MCF 10A (cell line): ENCODE measurements at regions of chr6 and their contacts with region 1.

Region 1: GRCh38 chr6:31827286-31828079 is at the start of gene HSPA1B:
- DNase-seq: peak; percentile 100
- H3K4me3 Mint-ChIP-seq: peak within 1 kb of the TSS; percentile 78
- H3K27ac Mint-ChIP-seq: peak within 1 kb of the TSS; percentile 99
- H3K4me1 Mint-ChIP-seq: peaks cover 13% of the 10 kb centered on the region
- H3K27me3 Mint-ChIP-seq: no peaks in the 10 kb centered on the region
- CTCF ChIP-seq: no peak
- total RNA-seq, gene HSPA1B: 29.8 and 51.6 TPM in 2 replicates

Region 2: GRCh38 chr6:31665501-31666336 is 161.8 kb before region 1 on chr6 and contains the start of gene CSNK2B:
- CTCF ChIA-PET with region 1: no interaction called
- POLR2A ChIA-PET with region 1: interaction called, 36 read pairs
- intact Hi-C with region 1: no loop called
- DNase-seq: peak; percentile 98
- H3K4me3 Mint-ChIP-seq: peak within 1 kb of the TSS; percentile 99
- H3K27ac Mint-ChIP-seq: peak within 1 kb of the TSS; percentile 99
- H3K4me1 Mint-ChIP-seq: peaks cover 31% of the 10 kb centered on the region
- H3K27me3 Mint-ChIP-seq: no peaks in the 10 kb centered on the region
- CTCF ChIP-seq: no peak
- total RNA-seq, gene CSNK2B: 197 and 209 TPM in 2 replicates

Region 3: GRCh38 chr6:31702819-31703522 is 124.5 kb before region 1 on chr6 and contains the start of gene ABHD16A:
- CTCF ChIA-PET with region 1: interaction called, 3 read pairs
- POLR2A ChIA-PET with region 1: interaction called, 20 read pairs
- intact Hi-C with region 1: no loop called
- DNase-seq: peak; percentile 98
- H3K4me3 Mint-ChIP-seq: peak within 1 kb of the TSS; percentile 95
- H3K27ac Mint-ChIP-seq: peak within 1 kb of the TSS; percentile 89
- H3K4me1 Mint-ChIP-seq: peaks cover 5% of the 10 kb centered on the region
- H3K27me3 Mint-ChIP-seq: no peaks in the 10 kb centered on the region
- CTCF ChIP-seq: no peak
- total RNA-seq, gene ABHD16A: 32.1 and 42.7 TPM in 2 replicates

Region 4: GRCh38 chr6:31776989-31777666 is 50.4 kb before region 1 on chr6 and contains the start of gene VWA7:
- CTCF ChIA-PET with region 1: interaction called, 4 read pairs
- POLR2A ChIA-PET with region 1: interaction called, 17 read pairs
- intact Hi-C with region 1: loop called (anchors 1 kb)
- DNase-seq: peak; percentile 95
- H3K4me3 Mint-ChIP-seq: peak within 1 kb of the TSS; percentile 26
- H3K27ac Mint-ChIP-seq: no peak within 1 kb of the TSS
- H3K4me1 Mint-ChIP-seq: peaks cover 26% of the 10 kb centered on the region
- H3K27me3 Mint-ChIP-seq: no peaks in the 10 kb centered on the region
- CTCF ChIP-seq: no peak
- total RNA-seq, gene VWA7: 2.0 and 3.1 TPM in 2 replicates

Region 5: DNA sequence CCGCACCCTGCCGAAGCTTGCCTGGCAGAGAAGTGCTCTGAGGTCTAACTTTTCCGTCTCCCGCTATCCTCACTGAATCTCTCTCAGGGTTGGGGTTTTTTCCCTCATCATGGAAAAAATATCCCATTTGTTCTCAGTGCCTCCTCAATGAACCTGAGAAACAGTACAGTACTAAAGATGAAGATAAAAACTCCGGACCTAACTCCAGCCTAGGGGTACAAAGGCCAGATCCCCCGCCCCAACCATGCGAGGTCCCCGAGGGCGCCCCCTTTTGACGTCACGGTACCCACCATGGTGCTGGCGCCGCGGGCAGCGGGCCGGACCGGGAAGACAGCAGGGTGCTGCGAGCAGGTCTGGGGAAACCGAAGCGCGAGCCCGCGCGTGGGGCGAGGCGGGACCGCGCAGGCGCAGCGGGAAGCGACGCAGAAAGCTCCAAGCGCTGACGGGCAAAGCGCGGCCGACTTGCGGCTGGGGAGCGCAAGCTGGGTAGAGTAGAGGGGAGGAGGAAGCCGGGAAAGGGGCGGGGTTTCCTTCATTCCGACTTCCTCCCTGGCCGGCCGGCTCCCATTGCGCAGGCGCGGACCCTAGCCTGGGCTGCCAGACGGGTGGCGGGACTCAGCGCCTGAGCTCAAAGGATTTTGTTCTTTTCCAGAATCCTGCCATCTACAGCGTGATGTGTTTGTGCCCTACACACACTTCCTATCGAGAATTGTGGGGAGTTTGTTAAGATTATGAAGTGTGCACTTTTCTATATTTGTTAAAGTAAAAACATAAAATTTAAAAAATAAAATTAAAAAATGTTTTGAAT is 20.8 kb before region 1 on chr6 and contains the start of gene LSM2:
- CTCF ChIA-PET with region 1: interaction called, 6 read pairs
- POLR2A ChIA-PET with region 1: interaction called, 192 read pairs
- intact Hi-C with region 1: no loop called
- DNase-seq: peak; percentile 98
- H3K4me3 Mint-ChIP-seq: peak within 1 kb of the TSS; percentile 82
- H3K27ac Mint-ChIP-seq: peak within 1 kb of the TSS; percentile 84
- H3K4me1 Mint-ChIP-seq: peaks cover 6% of the 10 kb centered on the region
- H3K27me3 Mint-ChIP-seq: no peaks in the 10 kb centered on the region
- CTCF ChIP-seq: peak; percentile 27
- total RNA-seq, gene LSM2: 36.9 and 47.4 TPM in 2 replicates

Region 6: GRCh38 chr6:31862344-31863227 is 35.1 kb after region 1 on chr6 and contains the start of gene NEU1:
- CTCF ChIA-PET with region 1: interaction called, 5 read pairs
- POLR2A ChIA-PET with region 1: interaction called, 22 read pairs
- intact Hi-C with region 1: no loop called
- DNase-seq: peak; percentile 100
- H3K4me3 Mint-ChIP-seq: peak within 1 kb of the TSS; percentile 89
- H3K27ac Mint-ChIP-seq: peak within 1 kb of the TSS; percentile 66
- H3K4me1 Mint-ChIP-seq: peaks cover 10% of the 10 kb centered on the region
- H3K27me3 Mint-ChIP-seq: no peaks in the 10 kb centered on the region
- CTCF ChIP-seq: no peak
- total RNA-seq, gene NEU1: 19.7 and 43.8 TPM in 2 replicates